HepG2 (cell line): ENCODE measurements at regions of chr1 and their contacts with region 1.

Region 1: GRCh38 chr1:87024936-87025540 is 110.6 kb downstream of the HS2ST1 start:
- DNase-seq: peak; percentile 58
- ATAC-seq: peak; percentile 95
- H3K4me3 ChIP-seq: no peak overlapping the region
- H3K27ac ChIP-seq: peak overlapping the region; percentile 11
- H3K4me1 ChIP-seq: peaks cover 16% of the 10 kb centered on the region
- H3K27me3 ChIP-seq: no peaks in the 10 kb centered on the region
- CTCF ChIP-seq: peak; percentile 78
- EP300 ChIP-seq: no peak
- POLR2A ChIP-seq: no peak
- RAD21 ChIP-seq: no peak

Region 2: GRCh38 chr1:86704458-86704971 is 320.5 kb before region 1 on chr1 and contains the start of gene SH3GLB1:
- CTCF ChIA-PET with region 1: no interaction called
- POLR2A ChIA-PET with region 1: no interaction called
- in situ Hi-C with region 1: no loop called
- intact Hi-C with region 1: loop called (anchors 10 kb)
- DNase-seq: peak; percentile 74
- ATAC-seq: peak; percentile 97
- H3K4me3 ChIP-seq: peak within 1 kb of the TSS; percentile 84 to 97 (median 95)
- H3K27ac ChIP-seq: peak within 1 kb of the TSS; percentile 90
- H3K4me1 ChIP-seq: peaks cover 34% of the 10 kb centered on the region
- H3K27me3 ChIP-seq: no peaks in the 10 kb centered on the region; a peak in 1 of 5 replicates
- CTCF ChIP-seq: peak; percentile 88
- EP300 ChIP-seq: no peak
- POLR2A ChIP-seq: peak; percentile 73
- RAD21 ChIP-seq: peak; percentile 78
- total RNA-seq, gene SH3GLB1: 41.5 and 55.7 TPM in 2 replicates

Region 3: DNA sequence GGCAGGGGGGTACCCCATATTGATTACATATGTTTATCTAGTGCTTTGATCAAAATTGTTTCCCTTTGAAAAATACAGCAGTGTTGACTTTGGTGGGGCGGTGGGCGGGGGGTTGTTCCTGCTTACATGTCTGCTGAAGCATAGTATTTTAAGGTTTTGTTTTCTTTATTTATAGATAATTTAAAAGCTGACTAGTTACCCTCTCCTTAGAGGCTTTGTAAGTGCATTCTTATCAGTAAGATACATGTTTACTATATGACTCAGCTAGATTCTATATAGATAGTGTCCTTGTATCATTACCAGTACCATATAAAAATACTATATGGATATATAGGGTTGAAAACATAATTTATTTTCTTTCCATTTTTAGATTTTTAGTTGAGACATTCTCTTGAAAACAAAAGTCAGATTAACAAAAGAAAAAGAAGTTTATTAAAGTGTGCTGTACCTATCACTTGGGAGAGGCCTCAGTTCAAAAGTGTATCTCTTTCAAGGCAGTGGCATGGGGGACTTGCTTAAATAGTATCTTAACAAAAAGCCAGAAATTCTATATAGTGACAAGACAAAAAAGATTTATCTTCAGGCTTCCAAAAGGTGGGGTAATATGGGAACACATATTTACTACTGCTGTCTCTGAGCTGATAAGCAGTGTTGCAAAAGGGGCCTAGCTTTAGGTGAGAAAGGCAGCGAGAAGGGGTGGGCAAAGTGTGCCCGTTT is 31.6 kb before region 1 on chr1:
- CTCF ChIA-PET with region 1: no interaction called
- POLR2A ChIA-PET with region 1: no interaction called
- in situ Hi-C with region 1: no loop called
- intact Hi-C with region 1: loop called (anchors 5 kb)
- DNase-seq: peak; percentile 31
- ATAC-seq: peak; percentile 48; the same call in 2 of the 3 replicates
- H3K4me3 ChIP-seq: no peak overlapping the region
- H3K27ac ChIP-seq: peak overlapping the region; percentile 19
- H3K4me1 ChIP-seq: peaks cover 65% of the 10 kb centered on the region
- H3K27me3 ChIP-seq: no peaks in the 10 kb centered on the region
- CTCF ChIP-seq: no peak
- EP300 ChIP-seq: peak in 1 of 2 experiments; percentile 70; a peak in 2 of 4 replicates
- POLR2A ChIP-seq: no peak
- RAD21 ChIP-seq: no peak

Region 4: GRCh38 chr1:87103074-87103473 is 78.0 kb after region 1 on chr1:
- CTCF ChIA-PET with region 1: no interaction called
- POLR2A ChIA-PET with region 1: no interaction called
- in situ Hi-C with region 1: no loop called
- intact Hi-C with region 1: no loop called
- DNase-seq: no peak
- ATAC-seq: no peak
- H3K4me3 ChIP-seq: no peak overlapping the region
- H3K27ac ChIP-seq: no peak overlapping the region
- H3K4me1 ChIP-seq: peaks cover 11% of the 10 kb centered on the region
- H3K27me3 ChIP-seq: no peaks in the 10 kb centered on the region
- CTCF ChIP-seq: no peak
- EP300 ChIP-seq: no peak
- POLR2A ChIP-seq: no peak
- RAD21 ChIP-seq: no peak

Region 5: DNA sequence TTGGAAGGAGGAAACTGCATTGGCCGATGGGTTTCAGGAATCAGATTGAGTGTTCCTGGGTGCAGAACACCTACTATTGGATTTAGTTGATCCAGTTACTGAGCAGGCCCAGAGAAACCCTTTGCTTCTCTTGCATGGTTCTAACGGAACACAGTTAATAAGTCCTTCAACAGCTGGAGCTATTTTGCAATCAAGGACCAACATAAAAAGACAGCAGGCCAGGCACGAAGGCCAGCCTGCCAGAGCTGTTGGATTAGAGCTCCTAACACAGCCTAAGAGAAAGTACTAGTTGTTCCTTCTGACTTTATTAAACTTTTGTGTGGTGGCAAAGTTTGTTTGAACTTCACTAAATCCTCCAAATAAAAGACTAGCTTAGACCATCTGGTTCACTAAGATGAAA is 155.6 kb after region 1 on chr1:
- CTCF ChIA-PET with region 1: no interaction called
- POLR2A ChIA-PET with region 1: no interaction called
- in situ Hi-C with region 1: no loop called
- intact Hi-C with region 1: no loop called
- DNase-seq: no peak
- ATAC-seq: no peak
- H3K4me3 ChIP-seq: no peak overlapping the region
- H3K27ac ChIP-seq: no peak overlapping the region
- H3K4me1 ChIP-seq: no peaks in the 10 kb centered on the region
- H3K27me3 ChIP-seq: peaks cover 0 to 8% of the 10 kb centered on the region in 2 experiments; a peak in 3 of 5 replicates
- CTCF ChIP-seq: no peak
- EP300 ChIP-seq: no peak
- POLR2A ChIP-seq: no peak
- RAD21 ChIP-seq: no peak

Region 6: DNA sequence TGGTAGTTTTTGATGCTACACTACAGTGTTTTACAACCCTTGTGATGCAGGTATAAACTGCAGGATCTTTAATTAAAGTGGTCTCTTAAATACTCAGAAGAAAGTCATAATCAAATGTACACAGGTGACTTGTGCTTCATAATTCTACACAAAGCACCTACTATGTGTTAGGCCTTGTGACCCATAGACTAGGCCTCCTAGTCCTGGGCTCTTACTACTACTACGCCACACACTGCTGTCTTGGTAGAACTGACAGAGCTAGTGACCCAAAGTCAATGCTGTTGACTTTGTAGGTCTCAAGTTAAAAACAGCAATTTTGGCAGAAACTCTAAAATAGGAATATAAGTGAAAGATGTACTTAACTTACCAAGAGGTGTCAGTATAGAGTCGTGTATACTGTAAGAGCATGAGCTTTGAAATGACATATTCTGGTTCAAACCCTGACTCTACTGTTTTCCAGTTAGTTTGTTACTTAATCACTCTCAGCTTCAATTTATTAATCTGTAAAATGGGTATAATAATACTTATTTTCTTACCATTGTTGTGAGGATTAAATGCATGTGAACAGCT is 255.0 kb after region 1 on chr1:
- CTCF ChIA-PET with region 1: no interaction called
- POLR2A ChIA-PET with region 1: no interaction called
- in situ Hi-C with region 1: no loop called
- intact Hi-C with region 1: no loop called
- DNase-seq: no peak
- ATAC-seq: no peak
- H3K4me3 ChIP-seq: no peak overlapping the region
- H3K27ac ChIP-seq: no peak overlapping the region
- H3K4me1 ChIP-seq: no peaks in the 10 kb centered on the region
- H3K27me3 ChIP-seq: peaks cover 0 to 1% of the 10 kb centered on the region in 2 experiments; a peak in 1 of 5 replicates
- CTCF ChIP-seq: no peak
- EP300 ChIP-seq: no peak
- POLR2A ChIP-seq: no peak
- RAD21 ChIP-seq: no peak